Dendritic cell treated with granulocyte-macrophage colony-stimulating factor and Interleukin-4, amounts not matched to agents 40 ng/mL and 50 ng/mL, for 4 days (primary cell): ENCODE measurements at regions of chr9 and their contacts with region 1.

Region 1: GRCh38 chr9:132800038-132800648 is 77.9 kb downstream of the AK8 start:
- H3K4me3 Mint-ChIP-seq: no peak overlapping the region
- H3K27ac Mint-ChIP-seq: no peak overlapping the region
- H3K4me1 Mint-ChIP-seq: no peaks in the 10 kb centered on the region
- H3K27me3 Mint-ChIP-seq: peaks cover 44% of the 10 kb centered on the region

Region 2: DNA sequence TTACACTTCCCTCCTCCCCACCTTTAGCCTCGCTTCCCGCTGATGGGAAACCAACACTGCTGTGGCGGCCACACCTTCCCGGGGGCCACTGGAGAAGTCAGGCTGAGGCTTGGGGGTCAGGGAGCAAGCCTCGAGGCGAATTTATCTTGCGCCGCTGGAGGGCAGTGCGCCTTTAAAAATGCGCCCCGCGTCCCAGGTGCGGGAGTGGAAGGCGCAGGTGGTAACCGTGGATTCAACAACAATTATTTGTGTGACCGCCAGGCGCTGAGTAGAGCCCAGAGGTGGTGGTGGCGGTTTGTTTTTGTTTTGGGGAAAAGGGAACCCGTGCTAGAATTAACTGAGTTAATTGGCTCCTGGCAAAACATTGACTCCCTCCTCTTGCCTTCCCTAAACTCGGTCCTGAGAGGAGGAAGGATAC is 389.0 kb before region 1 on chr9:
- intact Hi-C with region 1: loop called (anchors 2 kb)
- H3K4me3 Mint-ChIP-seq: peak overlapping the region; percentile 53
- H3K27ac Mint-ChIP-seq: no peak overlapping the region
- H3K4me1 Mint-ChIP-seq: peaks cover 27% of the 10 kb centered on the region
- H3K27me3 Mint-ChIP-seq: peaks cover 66% of the 10 kb centered on the region

Region 3: GRCh38 chr9:132507746-132508469 is 292.2 kb before region 1 on chr9:
- intact Hi-C with region 1: loop called (anchors 1 kb)
- H3K4me3 Mint-ChIP-seq: no peak overlapping the region
- H3K27ac Mint-ChIP-seq: no peak overlapping the region
- H3K4me1 Mint-ChIP-seq: peaks cover 8% of the 10 kb centered on the region
- H3K27me3 Mint-ChIP-seq: peaks cover 25% of the 10 kb centered on the region

Region 4: DNA sequence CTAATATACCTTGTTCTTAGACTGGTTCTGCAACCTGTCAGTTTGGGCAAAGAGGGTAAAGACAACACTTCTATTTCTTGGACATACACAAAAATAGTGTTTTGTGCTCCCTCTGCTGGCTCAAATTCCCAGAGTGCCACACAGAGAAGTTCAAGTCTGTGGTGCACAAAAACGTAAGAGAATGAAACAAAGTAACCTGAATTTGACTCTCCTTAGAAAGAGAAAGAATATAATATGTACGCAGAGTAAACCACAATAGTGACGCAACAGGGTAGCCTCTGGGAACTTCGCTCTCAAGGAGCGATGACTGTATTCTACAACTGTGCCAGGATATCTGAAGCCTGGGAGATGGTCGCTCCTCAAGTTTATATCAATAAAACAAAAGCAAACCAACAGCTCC is 148.9 kb before region 1 on chr9:
- intact Hi-C with region 1: loop called (anchors 10 kb)
- H3K4me3 Mint-ChIP-seq: no peak overlapping the region
- H3K27ac Mint-ChIP-seq: no peak overlapping the region
- H3K4me1 Mint-ChIP-seq: no peaks in the 10 kb centered on the region
- H3K27me3 Mint-ChIP-seq: no peaks in the 10 kb centered on the region

Region 5: GRCh38 chr9:132669698-132670456 is 130.3 kb before region 1 on chr9 and contains the start of gene DDX31:
- intact Hi-C with region 1: no loop called
- H3K4me3 Mint-ChIP-seq: peak within 1 kb of the TSS; percentile 96
- H3K27ac Mint-ChIP-seq: peak within 1 kb of the TSS; percentile 97
- H3K4me1 Mint-ChIP-seq: peaks cover 34% of the 10 kb centered on the region
- H3K27me3 Mint-ChIP-seq: no peaks in the 10 kb centered on the region

Region 6: GRCh38 chr9:132694157-132694556 is 106.0 kb before region 1 on chr9:
- intact Hi-C with region 1: loop called (anchors 10 kb)
- H3K4me3 Mint-ChIP-seq: no peak overlapping the region
- H3K27ac Mint-ChIP-seq: no peak overlapping the region
- H3K4me1 Mint-ChIP-seq: peaks cover 6% of the 10 kb centered on the region
- H3K27me3 Mint-ChIP-seq: no peaks in the 10 kb centered on the region